ENCODE measurements at regions of chr19 and their contacts with region 1.

Region 1: DNA sequence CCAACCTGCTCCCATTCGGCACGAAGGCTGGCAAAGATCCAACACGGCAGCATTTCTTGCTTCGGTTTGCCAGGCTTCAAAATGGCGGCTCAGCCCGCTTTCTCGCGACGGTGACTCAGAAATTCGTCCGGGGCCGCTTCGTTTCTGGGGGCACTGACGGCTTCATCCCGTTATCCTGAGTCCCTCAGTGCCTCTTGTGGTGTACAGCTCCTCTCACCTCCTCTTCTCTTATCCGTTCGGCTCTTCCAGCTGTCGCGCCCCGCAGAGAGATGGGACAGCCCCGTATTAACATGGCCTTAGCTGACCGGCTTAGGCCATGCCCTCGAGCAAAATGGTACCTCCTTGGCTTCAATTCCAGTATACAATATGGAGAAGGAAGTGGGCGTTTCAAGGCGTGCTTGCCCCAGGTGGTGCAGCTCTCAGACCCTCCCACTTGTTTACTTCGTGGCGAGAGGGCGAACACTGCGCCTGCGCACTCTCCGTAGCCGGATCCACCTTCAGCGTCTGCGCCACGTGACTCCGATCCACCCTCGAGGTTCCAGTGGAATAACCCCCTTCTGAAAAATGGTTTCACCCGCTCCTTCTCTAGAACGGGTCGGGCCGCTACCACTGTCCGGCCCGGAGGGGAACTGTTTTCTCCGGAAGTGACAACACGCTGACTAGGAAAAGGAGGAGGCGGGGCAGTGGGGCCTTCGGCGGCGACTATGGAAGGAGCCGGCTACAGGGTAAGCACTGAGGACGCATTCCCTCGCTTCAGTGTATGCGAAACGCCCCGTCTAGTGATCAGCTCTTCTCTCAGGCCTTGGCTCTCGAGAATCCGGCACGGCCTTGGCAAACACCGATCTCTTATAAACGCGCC is at the starts of genes AKT1S1 and TBC1D17:
- DNase-seq: peak; percentile 100
- ATAC-seq: peak; percentile 85
- H3K4me3 ChIP-seq: peak within 1 kb of the TSS; percentile 90
- H3K27ac ChIP-seq: peak within 1 kb of the TSS; percentile 95
- H3K4me1 ChIP-seq: peaks cover 16% of the 10 kb centered on the region
- H3K27me3 ChIP-seq: no peaks in the 10 kb centered on the region
- CTCF ChIP-seq: no peak
- EP300 ChIP-seq: no peak; a peak in 1 of 4 replicates
- POLR2A ChIP-seq: peak; percentile 86
- RAD21 ChIP-seq: no peak
- polyA plus RNA-seq, gene AKT1S1: 0.43 to 1.2 TPM
- polyA plus RNA-seq, gene TBC1D17: 0.42 to 0.52 TPM

Region 2: GRCh38 chr19:49817964-49818648 is 59.1 kb before region 1 on chr19 and contains the start of gene MED25:
- CTCF ChIA-PET with region 1: no interaction called
- POLR2A ChIA-PET with region 1: interaction called, 6 read pairs
- RAD21 ChIA-PET with region 1: interaction called, 3 read pairs
- SMC1A ChIA-PET with region 1: interaction called, 3 read pairs
- in situ Hi-C with region 1: no loop called
- intact Hi-C with region 1: loop called (anchors 1 kb)
- DNase-seq: peak; percentile 72
- ATAC-seq: peak; percentile 89
- H3K4me3 ChIP-seq: peak within 1 kb of the TSS; percentile 96
- H3K27ac ChIP-seq: peak within 1 kb of the TSS; percentile 97
- H3K4me1 ChIP-seq: peaks cover 5% of the 10 kb centered on the region
- H3K27me3 ChIP-seq: no peaks in the 10 kb centered on the region
- CTCF ChIP-seq: peak in 1 of 3 experiments; percentile 20; a peak in 1 of 6 replicates
- EP300 ChIP-seq: no peak
- POLR2A ChIP-seq: peak; percentile 89
- RAD21 ChIP-seq: no peak
- polyA plus RNA-seq, gene MED25: 3.5 to 5.2 TPM

Region 3: DNA sequence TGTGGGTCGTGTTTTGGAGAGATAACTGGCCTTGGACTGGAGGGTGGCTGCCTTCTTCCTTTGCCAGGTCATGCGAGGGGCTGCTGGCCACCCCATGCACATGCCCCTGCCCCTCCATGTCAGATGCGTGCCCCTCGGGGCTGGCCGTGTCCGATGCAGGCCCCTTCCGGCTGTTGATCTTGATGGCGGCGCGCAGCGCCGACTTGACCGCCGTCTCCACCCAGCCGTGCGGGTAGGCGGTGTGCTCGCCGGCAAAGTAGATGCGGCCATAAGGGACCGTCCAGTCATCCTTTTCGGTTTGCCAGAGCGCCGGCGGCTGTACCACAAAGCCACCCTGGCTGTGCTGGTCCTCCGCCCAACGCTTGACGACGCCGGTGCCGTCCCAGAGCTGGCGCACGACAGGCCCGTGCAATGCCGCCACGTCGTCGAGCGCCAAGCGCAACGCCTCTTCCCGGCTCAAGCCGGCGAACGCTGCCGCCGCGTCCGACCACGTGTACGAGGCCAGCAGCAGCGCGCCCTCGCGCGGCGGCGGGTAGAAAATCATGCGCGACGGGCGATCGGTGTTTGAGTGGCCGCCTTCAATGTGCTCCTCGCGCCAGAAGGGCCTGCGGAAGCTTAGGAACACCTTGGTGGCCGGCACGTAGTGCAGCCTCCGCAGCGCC is 12.6 kb after region 1 on chr19:
- CTCF ChIA-PET with region 1: interaction called, 4 read pairs
- POLR2A ChIA-PET with region 1: interaction called, 12 read pairs
- RAD21 ChIA-PET with region 1: interaction called, 3 read pairs
- SMC1A ChIA-PET with region 1: interaction called, 3 read pairs
- in situ Hi-C with region 1: no loop called
- intact Hi-C with region 1: loop called (anchors 1 kb)
- DNase-seq: no peak
- ATAC-seq: peak; percentile 31
- H3K4me3 ChIP-seq: peak overlapping the region; percentile 53; the same call in 1 of the 2 replicates
- H3K27ac ChIP-seq: peak overlapping the region; percentile 18; the same call in 1 of the 2 replicates
- H3K4me1 ChIP-seq: peaks cover 25% of the 10 kb centered on the region
- H3K27me3 ChIP-seq: no peaks in the 10 kb centered on the region
- CTCF ChIP-seq: peak; percentile 64 to 79 (median 71)
- EP300 ChIP-seq: no peak
- POLR2A ChIP-seq: no peak
- RAD21 ChIP-seq: peak; percentile 40

Region 4: GRCh38 chr19:49911381-49912145 is 34.3 kb after region 1 on chr19:
- CTCF ChIA-PET with region 1: interaction called, 4 read pairs
- POLR2A ChIA-PET with region 1: interaction called, 18 read pairs
- RAD21 ChIA-PET with region 1: interaction called, 7 read pairs
- SMC1A ChIA-PET with region 1: interaction called, 6 read pairs
- in situ Hi-C with region 1: no loop called
- intact Hi-C with region 1: no loop called
- DNase-seq: peak; percentile 83
- ATAC-seq: peak; percentile 86
- H3K4me3 ChIP-seq: peak overlapping the region; percentile 49; the same call in 1 of the 2 replicates
- H3K27ac ChIP-seq: peak overlapping the region; percentile 76
- H3K4me1 ChIP-seq: peaks cover 61% of the 10 kb centered on the region
- H3K27me3 ChIP-seq: no peaks in the 10 kb centered on the region
- CTCF ChIP-seq: no peak
- EP300 ChIP-seq: no peak
- POLR2A ChIP-seq: peak; percentile 68
- RAD21 ChIP-seq: 0 out of 2 replicates have a peak, but pooled peaks have one; percentile 1

Measured in GM12878 (cell line).